ENCODE measurements at regions of chr1 and their contacts with region 1.

Region 1: DNA sequence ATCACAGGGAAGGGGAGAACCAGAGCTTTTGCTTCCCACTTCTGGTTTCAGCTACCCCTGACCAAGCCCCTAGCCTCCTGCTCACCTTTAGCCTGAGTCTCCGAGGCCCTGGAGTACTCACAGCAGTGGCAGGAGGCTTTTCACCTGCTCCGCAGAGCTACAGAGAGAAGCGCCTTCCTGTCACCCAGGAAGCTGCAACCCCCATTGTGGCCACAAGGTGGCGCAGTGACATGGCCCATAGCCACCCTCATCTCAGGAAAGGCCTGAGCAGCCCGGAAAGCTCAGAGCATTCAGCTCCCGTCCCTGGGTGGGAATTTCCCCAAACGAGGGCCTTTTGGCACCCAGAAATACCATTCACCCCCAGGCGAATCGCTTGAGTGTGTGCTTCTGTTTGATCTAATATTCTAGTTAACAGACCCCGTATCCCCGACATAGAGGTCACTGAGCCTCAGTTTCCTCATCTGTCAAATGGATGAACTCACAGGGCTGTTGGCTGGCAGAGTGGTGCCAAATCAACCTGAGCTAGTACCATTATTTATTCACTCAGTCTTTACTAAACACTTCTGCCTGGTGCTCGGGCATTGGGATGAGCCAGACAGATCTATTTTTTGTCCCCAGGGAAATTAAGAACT is 25.3 kb downstream of the A3GALT2 start:
- DNase-seq: peak; percentile 93
- ATAC-seq: peak; percentile 93
- H3K4me3 Mint-ChIP-seq: no peak overlapping the region
- H3K27ac Mint-ChIP-seq: no peak overlapping the region
- H3K4me1 Mint-ChIP-seq: peaks cover 2% of the 10 kb centered on the region
- H3K27me3 Mint-ChIP-seq: no peaks in the 10 kb centered on the region

Region 2: DNA sequence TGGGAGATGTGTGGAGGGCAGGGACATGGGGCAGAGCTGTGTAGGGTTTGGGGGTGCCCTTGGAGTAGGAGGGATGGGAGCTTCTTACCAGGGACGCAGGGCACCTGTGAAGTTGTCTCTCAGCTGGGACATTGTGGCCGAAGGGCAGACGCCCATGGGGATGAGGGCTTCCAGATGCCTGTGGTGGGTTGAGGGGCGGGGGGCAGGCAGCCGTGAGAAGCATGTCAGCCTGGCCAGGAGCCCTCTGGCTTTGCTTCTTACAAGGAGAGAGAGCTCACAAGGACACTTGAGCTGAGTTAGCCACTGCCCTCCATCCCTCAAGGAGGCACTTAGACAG is 16.8 kb after region 1 on chr1:
- CTCF ChIA-PET with region 1: interaction called, 16 read pairs
- POLR2A ChIA-PET with region 1: no interaction called
- intact Hi-C with region 1: no loop called
- DNase-seq: no peak
- ATAC-seq: no peak
- H3K4me3 Mint-ChIP-seq: no peak overlapping the region
- H3K27ac Mint-ChIP-seq: no peak overlapping the region
- H3K4me1 Mint-ChIP-seq: peaks cover 3% of the 10 kb centered on the region
- H3K27me3 Mint-ChIP-seq: peaks cover 2% of the 10 kb centered on the region

Region 3: DNA sequence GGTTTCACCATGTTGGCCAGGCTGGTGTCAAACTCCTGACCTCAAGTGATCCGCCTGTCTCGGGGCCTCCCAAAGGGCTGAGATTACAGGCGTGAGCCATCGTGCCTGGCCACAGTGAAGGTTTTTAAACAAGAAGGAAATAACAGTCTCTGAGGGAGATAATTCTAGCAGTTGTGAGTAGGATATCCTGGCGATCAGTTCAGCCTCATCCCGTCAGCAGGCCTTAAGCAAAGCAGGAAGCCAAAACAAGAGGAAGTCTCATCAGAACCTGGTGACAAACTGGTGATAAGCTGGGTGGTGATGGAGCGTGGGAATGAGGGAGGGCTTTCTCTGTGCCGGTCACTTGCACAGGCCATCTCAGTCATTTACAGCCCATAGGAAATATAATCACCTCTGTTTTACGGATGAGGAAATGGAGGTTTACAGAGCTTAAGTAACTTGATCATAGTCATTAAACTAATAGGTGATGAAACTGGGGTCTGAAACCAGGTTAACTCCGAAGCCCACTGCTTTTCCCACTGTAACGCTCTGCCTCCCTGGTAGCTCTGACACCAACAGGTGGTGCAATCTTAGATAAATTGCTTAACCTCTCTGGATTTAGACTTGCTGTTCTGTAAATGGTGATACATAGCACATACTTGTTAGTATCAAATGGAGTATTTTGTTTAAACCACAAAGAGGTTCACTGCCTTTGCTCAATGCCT is 66.1 kb after region 1 on chr1:
- CTCF ChIA-PET with region 1: interaction called, 56 read pairs
- POLR2A ChIA-PET with region 1: no interaction called
- intact Hi-C with region 1: no loop called
- DNase-seq: no peak
- ATAC-seq: no peak
- H3K4me3 Mint-ChIP-seq: no peak overlapping the region
- H3K27ac Mint-ChIP-seq: no peak overlapping the region
- H3K4me1 Mint-ChIP-seq: peaks cover 3% of the 10 kb centered on the region
- H3K27me3 Mint-ChIP-seq: no peaks in the 10 kb centered on the region

Region 4: DNA sequence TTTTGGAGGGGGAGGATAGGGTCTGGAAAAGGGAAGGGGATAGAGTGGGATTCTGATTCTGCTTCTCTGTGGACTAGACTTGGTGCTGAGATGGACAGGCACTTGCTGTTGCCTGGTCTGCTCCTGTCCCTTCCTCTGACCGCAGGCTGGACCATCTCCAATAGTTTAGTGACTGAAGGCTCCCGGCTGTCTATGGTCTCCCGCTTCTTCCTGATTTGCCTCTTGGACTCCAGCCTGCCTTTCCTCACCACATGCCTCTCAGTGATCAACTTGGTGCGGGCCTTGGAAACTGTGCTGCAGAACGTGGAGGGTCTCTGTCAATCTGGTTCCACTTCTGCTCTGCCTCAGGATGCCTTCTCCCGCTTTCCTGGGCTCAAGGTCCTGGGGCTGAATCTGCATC is 170.6 kb after region 1 on chr1:
- CTCF ChIA-PET with region 1: interaction called, 40 read pairs
- POLR2A ChIA-PET with region 1: no interaction called
- intact Hi-C with region 1: loop called (anchors 1 kb)
- DNase-seq: no peak
- ATAC-seq: no peak
- H3K4me3 Mint-ChIP-seq: no peak overlapping the region
- H3K27ac Mint-ChIP-seq: no peak overlapping the region
- H3K4me1 Mint-ChIP-seq: peaks cover 4% of the 10 kb centered on the region
- H3K27me3 Mint-ChIP-seq: no peaks in the 10 kb centered on the region